ENCODE measurements at regions of chr1 and their contacts with region 1.

Region 1: DNA sequence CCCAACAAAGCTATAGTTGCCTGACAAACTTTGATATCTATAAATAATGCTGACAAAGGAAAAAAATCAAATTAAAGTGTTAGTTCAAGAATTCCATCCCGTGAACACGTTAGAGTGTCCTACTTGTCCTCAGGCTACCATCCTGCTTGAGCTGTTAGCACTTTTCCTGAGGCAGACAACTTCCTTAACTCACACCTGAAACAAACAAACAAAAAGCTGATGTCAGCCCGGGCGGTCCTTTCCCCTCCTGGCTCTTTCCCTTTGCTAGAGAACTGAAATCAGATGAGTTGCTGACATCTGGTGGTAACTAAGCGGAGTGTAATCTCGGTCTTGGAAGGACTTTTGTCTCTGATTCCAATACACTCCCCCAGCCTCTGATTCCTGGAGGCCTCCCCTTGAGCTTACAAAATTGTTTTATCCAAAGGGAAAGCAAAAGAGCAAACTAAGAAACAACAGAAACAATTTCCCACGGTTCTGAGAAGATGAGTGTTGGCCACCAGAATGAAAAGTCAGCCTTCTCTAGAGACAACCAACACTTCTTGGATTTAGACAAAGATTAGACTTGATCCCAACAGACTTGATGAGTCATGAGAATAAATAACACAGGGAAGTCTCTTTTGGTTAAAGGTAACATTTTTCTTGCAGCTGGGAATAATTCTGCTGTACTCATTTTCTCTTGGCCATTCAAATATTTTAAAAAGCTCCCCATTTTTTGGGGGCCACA is 135.4 kb downstream of the PROX1 start:
- DNase-seq: peak; percentile 76
- H3K4me3 ChIP-seq: peak overlapping the region in 1 of 2 experiments; percentile 49; a peak in 1 of 4 replicates
- H3K27ac ChIP-seq: peak overlapping the region in 1 of 2 experiments; percentile 39; a peak in 2 of 4 replicates
- H3K4me1 ChIP-seq: peaks cover 0 to 10% of the 10 kb centered on the region in 2 experiments; a peak in 2 of 4 replicates
- H3K27me3 ChIP-seq: no peaks in the 10 kb centered on the region
- CTCF ChIP-seq: peak; percentile 62
- EP300 ChIP-seq: no peak
- RAD21 ChIP-seq: peak; percentile 98

Region 2: DNA sequence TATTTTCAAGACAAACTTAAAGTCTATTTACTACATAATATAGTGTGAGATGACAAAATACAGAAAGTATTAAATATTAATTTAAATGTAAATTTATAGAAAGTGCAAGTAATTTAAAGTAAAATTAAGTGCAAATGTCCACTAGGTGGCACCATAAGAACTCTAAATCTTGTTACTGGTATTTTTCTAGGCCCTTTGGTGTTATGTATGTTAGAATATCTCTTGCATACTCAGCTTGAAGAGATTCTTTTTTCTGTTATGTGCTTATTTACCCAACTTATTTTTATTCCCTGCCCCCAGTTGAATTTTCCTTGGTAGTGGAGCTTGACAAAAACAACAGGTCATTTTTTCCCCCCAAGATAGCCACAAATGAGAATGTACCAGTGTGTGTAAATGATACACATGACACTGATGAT is 1000.7 kb before region 1 on chr1:
- CTCF ChIA-PET with region 1: interaction called, 10 read pairs
- POLR2A ChIA-PET with region 1: no interaction called
- DNase-seq: peak; percentile 5
- H3K4me3 ChIP-seq: no peak overlapping the region
- H3K27ac ChIP-seq: peak overlapping the region in 1 of 2 experiments; percentile 38; a peak in 1 of 4 replicates
- H3K4me1 ChIP-seq: peaks cover 4 to 16% of the 10 kb centered on the region in 2 experiments; a peak in 3 of 4 replicates
- H3K27me3 ChIP-seq: no peaks in the 10 kb centered on the region
- CTCF ChIP-seq: peak; percentile 67
- EP300 ChIP-seq: no peak
- RAD21 ChIP-seq: peak; percentile 70

Region 3: GRCh38 chr1:213250041-213250440 is 873.2 kb before region 1 on chr1:
- CTCF ChIA-PET with region 1: interaction called, 17 read pairs
- POLR2A ChIA-PET with region 1: no interaction called
- DNase-seq: no peak
- H3K4me3 ChIP-seq: no peak overlapping the region
- H3K27ac ChIP-seq: no peak overlapping the region
- H3K4me1 ChIP-seq: no peaks in the 10 kb centered on the region; a peak in 2 of 4 replicates
- H3K27me3 ChIP-seq: no peaks in the 10 kb centered on the region
- CTCF ChIP-seq: no peak
- EP300 ChIP-seq: no peak
- RAD21 ChIP-seq: no peak

Region 4: GRCh38 chr1:213987927-213988506 is 135.2 kb before region 1 on chr1 and contains the start of gene PROX1:
- CTCF ChIA-PET with region 1: interaction called, 12 read pairs
- POLR2A ChIA-PET with region 1: interaction called, 12 read pairs
- DNase-seq: peak; percentile 67
- H3K4me3 ChIP-seq: peak within 1 kb of the TSS; percentile 67 to 75
- H3K27ac ChIP-seq: peak within 1 kb of the TSS; percentile 50 to 63
- H3K4me1 ChIP-seq: peaks cover 0 to 13% of the 10 kb centered on the region in 2 experiments; a peak in 3 of 4 replicates
- H3K27me3 ChIP-seq: peaks cover 25% of the 10 kb centered on the region
- CTCF ChIP-seq: no peak
- EP300 ChIP-seq: no peak
- RAD21 ChIP-seq: 0 out of 2 replicates have a peak, but pooled peaks have one; percentile 18
- polyA plus RNA-seq, gene PROX1: 0.25 and 0.45 TPM in 2 replicates

Region 5: GRCh38 chr1:214008791-214009620 is 114.2 kb before region 1 on chr1:
- CTCF ChIA-PET with region 1: interaction called, 11 read pairs
- POLR2A ChIA-PET with region 1: no interaction called
- DNase-seq: no peak
- H3K4me3 ChIP-seq: no peak overlapping the region
- H3K27ac ChIP-seq: peak overlapping the region; percentile 11 to 100; a peak in 3 of 4 replicates
- H3K4me1 ChIP-seq: peaks cover 0 to 50% of the 10 kb centered on the region in 2 experiments; a peak in 2 of 4 replicates
- H3K27me3 ChIP-seq: no peaks in the 10 kb centered on the region
- CTCF ChIP-seq: no peak
- EP300 ChIP-seq: no peak
- RAD21 ChIP-seq: no peak

Region 6: DNA sequence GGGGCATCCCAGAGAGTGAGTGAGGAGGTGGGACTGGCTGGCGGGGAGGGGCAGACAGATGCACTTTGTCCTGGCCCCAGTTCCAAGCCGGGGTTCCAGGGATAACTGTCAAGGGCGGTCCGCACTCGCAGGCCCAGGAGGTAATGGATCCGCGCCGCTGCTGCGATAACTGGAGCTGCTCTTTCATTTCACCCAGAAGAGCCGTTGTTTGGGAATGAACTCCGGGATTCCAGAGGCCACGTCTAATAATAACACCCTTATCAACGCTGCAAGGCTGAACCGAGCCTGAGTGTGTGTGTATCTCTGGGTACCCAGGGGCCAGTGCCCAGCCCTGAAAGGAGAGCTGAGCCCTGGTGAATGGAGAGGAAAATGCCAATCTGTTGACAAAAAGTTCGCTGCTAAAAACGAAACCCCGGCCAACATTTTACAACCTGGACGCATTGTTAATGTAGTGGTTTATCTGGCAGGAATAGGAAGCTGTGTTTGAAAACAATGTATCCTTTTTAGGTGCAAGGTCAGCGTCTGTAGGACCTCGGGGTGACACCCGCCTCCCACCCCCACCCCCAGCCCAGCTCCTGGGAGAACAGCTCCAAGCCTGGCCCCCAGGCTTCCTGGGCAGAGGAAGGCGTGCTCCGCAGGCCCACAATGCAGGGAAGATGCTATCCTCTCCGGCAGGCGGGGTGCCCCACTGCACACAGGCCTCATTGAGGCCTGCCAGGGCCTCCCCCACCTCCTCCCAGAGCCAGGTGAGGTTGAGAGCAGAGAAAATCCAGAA is 15.7 kb before region 1 on chr1:
- CTCF ChIA-PET with region 1: interaction called, 10 read pairs
- POLR2A ChIA-PET with region 1: no interaction called
- DNase-seq: no peak
- H3K4me3 ChIP-seq: no peak overlapping the region
- H3K27ac ChIP-seq: no peak overlapping the region
- H3K4me1 ChIP-seq: peaks cover 0 to 12% of the 10 kb centered on the region in 2 experiments; a peak in 1 of 4 replicates
- H3K27me3 ChIP-seq: no peaks in the 10 kb centered on the region
- CTCF ChIP-seq: no peak
- EP300 ChIP-seq: no peak
- RAD21 ChIP-seq: no peak

Region 7: GRCh38 chr1:214143006-214143992 is 20.1 kb after region 1 on chr1:
- CTCF ChIA-PET with region 1: interaction called, 13 read pairs
- POLR2A ChIA-PET with region 1: no interaction called
- DNase-seq: peak; percentile 29
- H3K4me3 ChIP-seq: no peak overlapping the region
- H3K27ac ChIP-seq: peak overlapping the region in 1 of 2 experiments; percentile 50; a peak in 2 of 4 replicates
- H3K4me1 ChIP-seq: peaks cover 0 to 14% of the 10 kb centered on the region in 2 experiments; a peak in 2 of 4 replicates
- H3K27me3 ChIP-seq: no peaks in the 10 kb centered on the region
- CTCF ChIP-seq: no peak
- EP300 ChIP-seq: peak in 1 of 2 experiments; percentile 53; a peak in 1 of 4 replicates
- RAD21 ChIP-seq: no peak

Region 8: GRCh38 chr1:214165850-214166374 is 42.7 kb after region 1 on chr1:
- CTCF ChIA-PET with region 1: no interaction called
- POLR2A ChIA-PET with region 1: no interaction called
- DNase-seq: peak; percentile 32
- H3K4me3 ChIP-seq: no peak overlapping the region
- H3K27ac ChIP-seq: peak overlapping the region in 1 of 2 experiments; percentile 61; a peak in 2 of 4 replicates
- H3K4me1 ChIP-seq: peaks cover 0 to 10% of the 10 kb centered on the region in 2 experiments; a peak in 1 of 4 replicates
- H3K27me3 ChIP-seq: no peaks in the 10 kb centered on the region
- CTCF ChIP-seq: no peak
- EP300 ChIP-seq: peak in 1 of 2 experiments; percentile 76; a peak in 1 of 4 replicates
- RAD21 ChIP-seq: no peak

Region 9: DNA sequence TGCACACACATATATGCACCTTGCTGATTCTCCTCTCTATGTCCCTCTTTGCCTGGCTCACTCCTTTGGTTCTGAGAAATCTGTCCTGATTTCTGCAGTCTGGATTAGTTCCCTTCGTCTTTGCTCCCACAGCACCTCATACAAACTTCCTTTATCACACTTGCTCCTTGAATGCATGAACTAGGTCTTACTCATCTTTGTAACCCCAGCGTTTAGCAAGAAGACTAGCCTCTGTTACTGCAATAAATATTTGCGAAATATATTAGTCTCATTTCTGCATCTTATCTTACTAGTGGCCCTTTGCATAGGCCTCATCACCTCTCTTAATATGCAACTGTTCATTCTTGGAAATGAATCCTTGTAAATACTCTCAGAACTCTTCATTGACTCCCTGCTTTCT is 169.1 kb after region 1 on chr1:
- CTCF ChIA-PET with region 1: no interaction called
- POLR2A ChIA-PET with region 1: no interaction called
- DNase-seq: no peak
- H3K4me3 ChIP-seq: no peak overlapping the region
- H3K27ac ChIP-seq: no peak overlapping the region
- H3K4me1 ChIP-seq: peaks cover 0 to 11% of the 10 kb centered on the region in 2 experiments; a peak in 2 of 4 replicates
- H3K27me3 ChIP-seq: no peaks in the 10 kb centered on the region
- CTCF ChIP-seq: no peak
- EP300 ChIP-seq: no peak
- RAD21 ChIP-seq: no peak

Measured in SK-N-SH (cell line).